ENCODE measurements at regions of chrX and their contacts with region 1.

Region 1: DNA sequence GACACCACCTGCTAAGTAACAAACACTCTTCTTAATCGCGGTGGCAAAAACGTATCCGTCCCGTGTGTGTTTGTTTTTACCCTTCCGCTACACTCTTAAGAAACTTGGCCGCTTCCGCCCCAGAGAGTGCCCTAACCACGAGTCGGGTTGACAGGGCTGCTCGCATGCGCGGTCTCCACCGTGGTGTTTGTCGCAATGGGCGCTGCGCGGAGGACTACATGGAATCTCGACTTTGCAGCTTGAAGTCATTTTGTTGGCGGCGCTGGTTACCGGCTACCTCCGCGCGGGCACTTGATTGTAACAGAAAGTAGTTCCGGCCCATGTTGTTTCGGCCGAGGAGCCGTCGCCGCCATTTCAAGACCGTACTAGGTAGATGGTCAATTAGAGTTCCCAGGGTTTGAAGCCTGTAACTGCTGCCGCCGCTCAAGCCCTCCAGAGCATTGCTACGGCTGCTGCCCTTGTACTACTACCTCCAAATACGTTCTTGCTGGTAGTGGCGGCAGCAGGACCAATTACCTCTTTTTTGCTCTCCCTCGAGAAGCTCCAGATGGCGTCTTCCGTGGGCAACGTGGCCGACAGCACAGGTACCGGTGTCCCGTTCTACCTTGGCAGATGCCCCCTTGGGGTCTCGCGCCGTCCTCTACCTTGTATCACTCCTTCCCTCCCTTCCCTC is at the start of gene OGT:
- DNase-seq: peak; percentile 92 to 95
- H3K4me3 ChIP-seq: peak within 1 kb of the TSS; percentile 89
- H3K4me3 Mint-ChIP-seq: peak within 1 kb of the TSS; percentile 99
- H3K27ac Mint-ChIP-seq: peak within 1 kb of the TSS; percentile 99
- H3K4me1 ChIP-seq: peaks cover 7% of the 10 kb centered on the region; the same call in 1 of the 2 replicates
- H3K4me1 Mint-ChIP-seq: no peaks in the 10 kb centered on the region
- H3K27me3 ChIP-seq: no peaks in the 10 kb centered on the region
- H3K27me3 Mint-ChIP-seq: no peaks in the 10 kb centered on the region
- CTCF ChIP-seq: no peak
- total RNA-seq, gene OGT: 190 and 211 TPM in 2 replicates

Region 2: DNA sequence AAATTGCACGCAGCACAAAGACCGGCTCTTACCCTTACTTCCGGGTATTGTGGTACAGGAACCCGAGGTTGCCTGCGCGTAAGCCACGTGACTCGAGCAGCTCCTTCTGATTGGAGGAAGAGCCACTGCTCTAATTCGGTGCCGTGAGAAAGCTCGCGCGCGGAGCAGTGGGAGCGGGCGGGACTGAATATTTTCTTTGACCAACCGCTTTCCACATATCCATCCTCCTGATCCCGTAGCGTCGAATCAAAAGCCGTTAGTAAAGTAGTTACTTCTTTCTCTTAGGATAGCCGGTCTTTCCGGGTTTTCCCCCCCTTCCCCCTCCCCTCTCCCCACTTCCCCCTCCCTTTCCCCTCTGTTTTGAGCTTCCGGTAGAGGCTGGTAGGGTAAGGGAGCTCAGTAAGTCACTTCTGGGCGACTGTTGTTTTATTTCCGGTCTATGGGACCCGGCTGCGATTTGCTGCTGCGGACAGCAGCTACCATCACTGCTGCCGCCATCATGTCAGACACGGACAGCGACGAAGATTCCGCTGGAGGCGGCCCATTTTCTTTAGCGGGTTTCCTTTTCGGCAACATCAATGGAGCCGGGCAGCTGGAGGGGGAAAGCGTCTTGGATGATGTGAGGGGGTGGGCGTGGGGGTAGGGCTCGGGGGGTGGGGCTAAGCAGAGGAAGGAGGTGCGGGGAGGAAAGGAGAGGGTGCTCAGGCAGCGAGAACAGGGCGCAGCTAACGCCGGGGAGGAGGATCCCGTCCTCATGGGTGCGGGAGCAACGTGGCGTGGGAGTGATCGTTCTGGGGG is 166.8 kb before region 1 on chrX and contains the start of gene TAF1:
- CTCF ChIA-PET with region 1: no interaction called
- POLR2A ChIA-PET with region 1: interaction called, 4 read pairs
- intact Hi-C with region 1: loop called (anchors 5 kb)
- DNase-seq: peak; percentile 91 to 96
- H3K4me3 ChIP-seq: peak within 1 kb of the TSS; percentile 71
- H3K4me3 Mint-ChIP-seq: peak within 1 kb of the TSS; percentile 94
- H3K27ac Mint-ChIP-seq: peak within 1 kb of the TSS; percentile 95
- H3K4me1 ChIP-seq: no peaks in the 10 kb centered on the region
- H3K4me1 Mint-ChIP-seq: no peaks in the 10 kb centered on the region
- H3K27me3 ChIP-seq: no peaks in the 10 kb centered on the region
- H3K27me3 Mint-ChIP-seq: no peaks in the 10 kb centered on the region
- CTCF ChIP-seq: no peak
- total RNA-seq, gene TAF1: 40.7 and 41.2 TPM in 2 replicates

Region 3: DNA sequence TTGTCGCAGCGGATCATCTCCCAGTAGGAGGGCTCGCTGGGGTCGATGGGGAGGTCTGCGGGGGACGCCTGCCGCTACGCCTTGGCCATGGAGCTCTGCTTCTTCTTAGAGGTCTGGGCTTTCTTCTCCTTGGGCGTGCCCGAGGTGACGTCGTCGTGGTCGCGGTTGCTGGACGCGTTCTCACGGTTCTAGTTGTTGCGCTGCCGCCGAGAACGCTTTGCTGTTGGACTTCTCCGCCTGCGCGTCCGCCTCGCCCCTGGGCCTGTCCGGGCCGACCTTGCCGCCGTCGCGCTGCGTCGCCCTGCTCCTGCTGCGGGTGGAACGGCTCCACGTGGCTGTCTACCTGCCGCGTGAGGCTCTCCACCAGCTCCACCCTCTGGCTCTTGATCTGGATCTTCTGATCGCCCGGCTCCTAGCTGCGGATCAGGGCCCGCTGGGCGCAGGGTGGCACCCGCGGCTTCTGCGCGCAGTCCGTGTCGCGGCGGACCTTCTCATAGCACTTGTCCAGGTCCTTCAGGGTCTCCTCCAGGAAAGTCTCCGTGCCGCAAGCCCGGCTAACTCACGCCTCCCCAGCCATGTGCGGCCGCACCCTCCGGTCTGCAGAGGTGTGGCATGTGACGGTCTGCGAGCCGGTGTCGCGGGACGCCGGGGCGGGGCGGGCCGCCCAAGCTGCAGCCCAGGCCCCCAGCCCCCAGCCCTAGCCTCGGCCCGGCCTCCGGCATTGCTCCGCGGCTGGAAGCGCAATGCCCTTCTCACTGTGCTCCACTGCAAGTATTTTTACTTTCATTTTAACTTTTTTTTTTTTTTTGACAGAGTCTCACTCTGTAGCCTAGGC is 40.4 kb before region 1 on chrX:
- CTCF ChIA-PET with region 1: no interaction called
- POLR2A ChIA-PET with region 1: no interaction called
- intact Hi-C with region 1: loop called (anchors 1 kb)
- DNase-seq: peak; percentile 62 to 66
- H3K4me3 ChIP-seq: peak overlapping the region; percentile 49
- H3K4me3 Mint-ChIP-seq: peak overlapping the region; percentile 81
- H3K27ac Mint-ChIP-seq: peak overlapping the region; percentile 78
- H3K4me1 ChIP-seq: no peaks in the 10 kb centered on the region
- H3K4me1 Mint-ChIP-seq: no peaks in the 10 kb centered on the region
- H3K27me3 ChIP-seq: no peaks in the 10 kb centered on the region
- H3K27me3 Mint-ChIP-seq: no peaks in the 10 kb centered on the region
- CTCF ChIP-seq: no peak

Region 4: DNA sequence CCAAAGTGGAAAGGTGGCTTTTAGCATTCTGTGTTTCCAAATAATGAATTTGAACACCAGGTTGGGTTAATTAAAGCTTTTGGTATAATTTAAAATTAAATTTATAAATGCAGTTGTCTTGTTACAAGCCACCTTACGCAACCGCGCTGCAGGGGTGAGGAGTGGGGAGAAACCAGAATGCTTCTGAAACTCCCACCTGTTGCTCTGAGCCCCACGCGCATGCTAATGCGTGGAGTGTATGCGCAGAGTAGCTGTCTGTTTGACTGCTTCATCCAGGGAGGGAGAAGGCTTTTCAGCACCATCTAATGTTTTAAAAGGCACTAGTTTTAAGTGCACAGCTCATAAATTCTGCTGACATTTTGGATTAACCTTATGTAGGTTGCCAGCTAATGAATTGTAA is 12.5 kb after region 1 on chrX:
- CTCF ChIA-PET with region 1: no interaction called
- POLR2A ChIA-PET with region 1: interaction called, 13 read pairs
- intact Hi-C with region 1: no loop called
- DNase-seq: no peak
- H3K4me3 ChIP-seq: no peak overlapping the region
- H3K4me3 Mint-ChIP-seq: no peak overlapping the region
- H3K27ac Mint-ChIP-seq: peak overlapping the region; percentile 35
- H3K4me1 ChIP-seq: no peaks in the 10 kb centered on the region; the same call in 1 of the 2 replicates
- H3K4me1 Mint-ChIP-seq: peaks cover 17% of the 10 kb centered on the region
- H3K27me3 ChIP-seq: no peaks in the 10 kb centered on the region
- H3K27me3 Mint-ChIP-seq: no peaks in the 10 kb centered on the region
- CTCF ChIP-seq: no peak

Measured in Caco-2 (cell line).